ENCODE measurements at regions of chr11 and their contacts with region 1.

Region 1: DNA sequence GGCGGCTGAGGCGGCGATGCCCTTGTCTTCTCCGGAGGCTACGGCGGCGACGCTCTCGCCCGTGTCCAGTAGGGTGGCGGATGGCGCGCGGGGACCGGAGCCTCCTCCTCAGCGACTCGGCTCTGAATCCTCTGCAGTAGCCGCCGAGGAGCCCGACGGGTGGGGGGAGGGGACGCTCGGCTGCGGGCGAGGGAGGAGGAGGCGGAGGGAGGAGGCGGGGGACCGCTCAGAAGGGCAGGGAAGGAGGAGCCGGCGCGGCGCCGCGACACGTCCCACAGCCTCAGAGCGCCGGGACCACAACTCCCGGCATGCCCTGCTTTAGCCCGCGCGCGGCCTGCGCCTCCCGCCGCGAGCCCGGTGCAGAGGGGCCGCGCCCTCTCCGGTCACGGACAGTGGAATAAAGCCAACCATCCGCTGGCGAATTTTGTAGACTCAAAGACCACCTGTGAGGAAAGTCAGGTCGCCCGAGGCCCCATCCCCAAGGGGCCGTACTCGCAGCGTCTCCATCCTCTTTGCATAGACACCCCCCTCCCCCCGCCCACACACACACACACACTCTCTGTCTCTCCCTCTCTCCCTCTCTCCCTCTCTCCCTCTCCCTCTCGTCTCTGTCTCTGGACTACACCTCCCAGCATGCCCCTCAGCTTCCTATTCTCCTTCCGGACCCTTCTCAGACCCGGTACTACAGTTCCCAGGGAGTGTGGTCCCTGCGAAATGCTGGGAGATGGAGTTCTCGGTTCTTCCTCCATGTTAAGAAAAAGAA is at the start of gene FAM168A:
- DNase-seq: peak; percentile 96
- H3K4me3 Mint-ChIP-seq: peak within 1 kb of the TSS; percentile 93
- H3K27ac Mint-ChIP-seq: peak within 1 kb of the TSS; percentile 92
- H3K4me1 Mint-ChIP-seq: peaks cover 42% of the 10 kb centered on the region
- H3K27me3 Mint-ChIP-seq: no peaks in the 10 kb centered on the region
- total RNA-seq, gene FAM168A: 17.4 and 19.8 TPM in 2 replicates

Region 2: DNA sequence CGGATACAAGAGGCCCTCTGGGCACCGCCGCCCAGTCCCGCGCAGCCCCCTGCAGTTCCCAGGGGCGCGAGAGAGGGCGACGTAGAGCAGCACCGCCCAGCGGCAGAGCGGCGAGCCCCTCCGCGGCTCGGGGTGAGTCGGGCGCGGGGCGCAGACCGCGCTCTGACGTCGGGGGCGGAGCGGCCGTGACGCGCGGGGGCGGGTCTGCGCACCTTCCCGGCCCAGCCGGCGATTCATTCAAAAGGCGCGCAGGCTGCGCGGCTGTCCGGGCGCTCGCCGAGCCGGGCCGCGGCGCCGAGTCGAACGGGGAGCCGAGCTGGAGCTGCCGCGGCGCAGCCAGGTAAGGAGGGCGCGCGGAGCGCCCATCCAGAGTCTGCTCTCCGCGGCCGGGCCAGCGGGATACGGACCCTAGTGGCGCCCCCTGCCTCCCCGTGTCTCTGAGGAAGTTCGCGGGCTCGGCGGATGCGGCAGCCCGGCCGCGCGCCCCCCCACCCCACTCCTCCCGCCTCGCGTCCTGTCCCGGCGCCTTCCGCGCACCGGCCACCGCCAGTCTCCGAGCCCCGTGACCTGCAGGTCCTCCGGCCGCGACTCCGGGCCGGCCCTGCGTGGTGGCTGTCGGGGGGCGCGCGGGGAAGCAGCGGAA is 221.9 kb before region 1 on chr11 and contains the start of gene RELT:
- intact Hi-C with region 1: loop called (anchors 1 kb)
- DNase-seq: peak; percentile 99
- H3K4me3 Mint-ChIP-seq: peak within 1 kb of the TSS; percentile 94
- H3K27ac Mint-ChIP-seq: peak within 1 kb of the TSS; percentile 95
- H3K4me1 Mint-ChIP-seq: peaks cover 35% of the 10 kb centered on the region
- H3K27me3 Mint-ChIP-seq: no peaks in the 10 kb centered on the region
- total RNA-seq, gene RELT: 35.0 and 38.5 TPM in 2 replicates

Region 3: DNA sequence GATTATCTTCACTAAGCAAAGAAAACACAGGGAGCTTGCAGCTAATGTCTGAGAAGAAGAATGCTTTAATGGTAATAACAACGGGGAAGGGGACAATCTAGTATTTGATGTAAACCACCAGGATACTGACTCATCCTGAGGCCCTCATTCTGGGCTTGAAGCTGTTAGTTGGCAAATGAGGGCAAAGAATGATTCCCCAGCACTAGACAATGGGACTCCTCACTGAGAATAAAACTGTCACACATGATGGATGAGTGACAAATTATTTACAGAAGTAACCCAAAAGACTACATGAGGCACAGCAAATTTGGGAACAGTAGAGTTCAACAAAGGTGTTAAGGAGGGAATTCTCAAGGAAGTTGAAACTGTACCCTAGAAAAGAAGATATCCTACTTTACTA is 76.5 kb before region 1 on chr11:
- intact Hi-C with region 1: loop called (anchors 5 kb)
- DNase-seq: no peak
- H3K4me3 Mint-ChIP-seq: peak overlapping the region; percentile 57
- H3K27ac Mint-ChIP-seq: peak overlapping the region; percentile 92
- H3K4me1 Mint-ChIP-seq: peaks cover 27% of the 10 kb centered on the region
- H3K27me3 Mint-ChIP-seq: no peaks in the 10 kb centered on the region

Region 4: DNA sequence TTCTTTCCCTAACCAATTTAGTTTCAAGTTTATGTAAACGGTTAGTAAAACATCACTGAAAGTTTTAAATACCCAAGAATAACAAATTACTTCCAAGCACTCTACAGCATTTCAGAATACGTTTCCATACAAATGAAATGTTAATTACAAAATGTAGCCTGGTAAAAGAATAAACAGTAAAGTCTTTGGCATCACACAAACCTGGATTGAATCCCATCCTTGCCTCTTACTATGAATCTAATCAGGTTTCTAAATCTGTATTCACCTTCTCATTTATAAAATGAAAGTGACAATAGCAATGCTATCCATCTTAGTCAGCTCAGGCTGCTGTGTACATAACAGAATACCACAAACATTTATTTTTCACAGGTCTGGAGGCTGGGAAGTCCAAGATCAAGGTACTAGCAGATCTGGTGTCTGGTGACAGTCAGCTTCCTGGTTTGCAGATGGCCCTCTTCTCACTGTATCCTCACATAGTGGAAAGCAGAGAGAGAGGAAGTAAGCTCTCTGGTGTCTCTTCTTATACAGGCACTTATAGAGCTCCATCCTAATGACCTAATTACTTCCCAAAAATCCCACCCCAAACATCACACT is 19.4 kb before region 1 on chr11:
- intact Hi-C with region 1: loop called (anchors 2 kb)
- DNase-seq: peak; percentile 71
- H3K4me3 Mint-ChIP-seq: no peak overlapping the region
- H3K27ac Mint-ChIP-seq: peak overlapping the region; percentile 68
- H3K4me1 Mint-ChIP-seq: peaks cover 23% of the 10 kb centered on the region
- H3K27me3 Mint-ChIP-seq: no peaks in the 10 kb centered on the region

Region 5: DNA sequence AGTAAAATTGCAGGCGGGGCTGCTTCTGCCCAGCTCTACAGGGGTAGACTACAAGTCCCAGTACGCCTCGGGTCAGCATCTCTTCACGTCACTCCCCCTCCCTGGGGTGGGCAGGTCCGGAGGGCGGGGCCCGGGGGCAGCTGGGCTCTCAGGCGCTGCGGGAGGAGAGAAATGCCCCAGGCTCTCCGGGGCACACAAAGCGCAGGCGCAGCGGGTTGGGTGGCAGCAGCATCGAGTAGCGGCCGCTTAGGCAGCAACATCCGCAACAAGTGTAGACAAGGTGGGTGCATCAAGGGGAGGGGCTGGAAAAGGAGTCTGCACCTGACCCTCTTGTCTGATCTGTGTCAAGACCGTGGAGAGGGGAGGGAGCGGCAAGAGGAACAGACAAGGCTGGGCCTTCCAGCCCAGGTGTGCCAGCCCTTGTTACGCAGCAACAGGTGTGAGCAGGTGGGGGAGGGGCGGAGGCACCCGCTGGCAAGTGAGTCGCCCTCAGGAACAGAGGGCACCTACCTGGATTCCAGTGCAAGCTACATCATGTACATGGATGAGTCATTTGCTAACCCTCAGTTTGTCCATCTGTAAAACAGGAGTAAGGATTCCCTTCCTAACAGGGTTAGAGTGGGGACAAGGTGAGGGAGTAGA is 49.4 kb after region 1 on chr11:
- intact Hi-C with region 1: loop called (anchors 2 kb)
- DNase-seq: peak; percentile 96
- H3K4me3 Mint-ChIP-seq: peak overlapping the region; percentile 75
- H3K27ac Mint-ChIP-seq: no peak overlapping the region
- H3K4me1 Mint-ChIP-seq: peaks cover 11% of the 10 kb centered on the region
- H3K27me3 Mint-ChIP-seq: peaks cover 3% of the 10 kb centered on the region

Region 6: DNA sequence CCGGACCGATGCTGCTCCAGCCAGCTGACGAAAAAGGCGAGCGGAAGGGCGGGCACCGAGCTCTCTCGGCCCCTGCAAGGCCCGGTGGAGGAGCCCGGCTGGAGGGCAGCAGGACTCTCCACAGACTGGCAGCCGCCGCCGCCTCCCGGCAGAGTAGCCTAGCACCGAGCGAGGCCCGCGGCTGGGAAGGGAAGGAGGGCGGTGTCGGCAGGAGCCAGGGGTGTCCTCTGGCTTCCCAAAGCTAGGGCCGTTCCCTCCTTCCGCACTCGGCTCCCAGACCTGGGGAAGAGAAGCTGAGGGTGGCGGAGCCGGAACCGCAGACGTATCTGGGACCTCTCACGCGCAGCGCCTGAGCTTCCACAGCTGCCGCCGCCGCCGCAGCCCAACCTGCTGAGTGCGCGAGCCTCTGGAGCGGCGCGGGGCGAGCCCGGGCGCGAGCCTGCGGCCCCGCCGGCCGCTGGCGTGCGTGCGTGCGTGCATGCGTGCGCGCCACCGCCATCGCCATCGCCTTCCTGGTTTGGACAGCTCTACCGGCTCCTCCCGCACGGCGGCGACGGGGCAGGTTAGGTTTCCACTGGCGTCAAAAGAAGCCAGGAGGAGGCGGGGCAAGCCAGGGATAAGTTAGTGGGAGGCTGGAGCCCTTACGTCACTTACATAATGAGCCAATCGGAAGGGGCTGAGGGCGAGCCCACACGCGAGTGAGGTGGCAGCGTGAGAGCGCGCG is 162.7 kb after region 1 on chr11 and contains the start of gene RAB6A:
- intact Hi-C with region 1: loop called (anchors 1 kb)
- DNase-seq: peak; percentile 100
- H3K4me3 Mint-ChIP-seq: peak within 1 kb of the TSS; percentile 97
- H3K27ac Mint-ChIP-seq: peak within 1 kb of the TSS; percentile 92
- H3K4me1 Mint-ChIP-seq: peaks cover 32% of the 10 kb centered on the region
- H3K27me3 Mint-ChIP-seq: peaks cover 3% of the 10 kb centered on the region
- total RNA-seq, gene RAB6A: 74.3 and 79.5 TPM in 2 replicates

Measured in activated CD4-positive, alpha-beta T cell treated with anti-CD3 and anti-CD28 coated beads, Interleukin-2, amount 10 ng/mL, durations not matched to agents 24 days and 14 days (primary cell).